Activated naive CD4-positive, alpha-beta T cell treated with anti-CD3 and anti-CD28 coated beads for 36 hours (primary cell): ENCODE measurements at regions of chr12 and their contacts with region 1.

Region 1: DNA sequence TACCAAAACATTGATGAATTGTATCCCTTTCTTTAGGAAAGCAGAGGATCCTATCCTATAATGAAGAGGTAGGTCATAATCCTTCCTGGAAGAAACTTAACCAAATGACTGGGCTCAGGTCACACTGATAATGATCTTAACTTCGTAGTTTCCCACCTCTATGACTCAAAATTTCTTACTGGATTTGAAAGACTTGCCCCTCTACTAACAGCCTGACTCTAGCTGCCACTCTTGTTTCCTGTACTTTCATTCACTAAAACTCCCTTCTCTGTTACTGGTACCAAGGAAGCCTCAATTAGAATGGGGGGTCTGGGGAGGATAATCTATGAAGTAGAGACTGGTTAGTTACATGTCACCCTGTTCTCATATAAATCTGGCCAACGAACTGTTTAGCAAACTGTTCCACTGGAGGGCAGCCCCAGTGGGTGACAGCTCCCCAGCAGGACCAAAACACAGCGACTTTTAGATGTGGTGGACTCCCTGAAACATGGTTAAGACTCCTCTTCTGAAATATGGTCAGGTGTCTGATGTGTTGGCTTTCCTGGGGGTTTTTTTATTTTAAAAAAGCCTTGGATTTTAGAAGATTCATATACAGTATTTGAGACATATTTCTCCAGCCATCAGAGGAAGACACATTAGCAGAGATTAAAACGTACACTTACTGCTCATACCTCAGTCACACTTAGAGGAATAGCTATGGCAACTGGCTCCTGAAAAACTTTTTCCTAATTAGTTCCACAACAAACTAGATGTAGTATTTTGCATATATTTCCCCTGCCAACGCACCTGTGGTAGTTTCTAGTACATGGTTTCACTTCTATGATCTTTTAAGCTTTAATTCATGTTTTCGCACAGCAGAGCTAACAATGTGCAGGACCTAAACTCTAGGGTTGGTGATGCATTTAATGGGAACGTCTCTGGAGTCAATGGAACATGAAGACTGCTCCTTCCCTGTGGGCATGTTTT is 72.3 kb downstream of the ACADS start:
- DNase-seq: peak; percentile 28
- H3K4me3 Mint-ChIP-seq: no peak overlapping the region
- H3K27ac Mint-ChIP-seq: peak overlapping the region; percentile 89
- H3K4me1 Mint-ChIP-seq: peaks cover 47% of the 10 kb centered on the region
- H3K27me3 Mint-ChIP-seq: no peaks in the 10 kb centered on the region

Region 2: GRCh38 chr12:120783197-120783596 is 14.8 kb before region 1 on chr12:
- CTCF ChIA-PET with region 1: interaction called, 7 read pairs
- intact Hi-C with region 1: loop called (anchors 1 kb)
- DNase-seq: peak; percentile 49
- H3K4me3 Mint-ChIP-seq: no peak overlapping the region
- H3K27ac Mint-ChIP-seq: peak overlapping the region; percentile 53
- H3K4me1 Mint-ChIP-seq: peaks cover 25% of the 10 kb centered on the region
- H3K27me3 Mint-ChIP-seq: no peaks in the 10 kb centered on the region

Region 3: GRCh38 chr12:120833849-120834248 is 35.9 kb after region 1 on chr12:
- CTCF ChIA-PET with region 1: no interaction called
- intact Hi-C with region 1: loop called (anchors 1 kb)
- DNase-seq: no peak
- H3K4me3 Mint-ChIP-seq: no peak overlapping the region
- H3K27ac Mint-ChIP-seq: no peak overlapping the region
- H3K4me1 Mint-ChIP-seq: peaks cover 70% of the 10 kb centered on the region
- H3K27me3 Mint-ChIP-seq: no peaks in the 10 kb centered on the region

Region 4: DNA sequence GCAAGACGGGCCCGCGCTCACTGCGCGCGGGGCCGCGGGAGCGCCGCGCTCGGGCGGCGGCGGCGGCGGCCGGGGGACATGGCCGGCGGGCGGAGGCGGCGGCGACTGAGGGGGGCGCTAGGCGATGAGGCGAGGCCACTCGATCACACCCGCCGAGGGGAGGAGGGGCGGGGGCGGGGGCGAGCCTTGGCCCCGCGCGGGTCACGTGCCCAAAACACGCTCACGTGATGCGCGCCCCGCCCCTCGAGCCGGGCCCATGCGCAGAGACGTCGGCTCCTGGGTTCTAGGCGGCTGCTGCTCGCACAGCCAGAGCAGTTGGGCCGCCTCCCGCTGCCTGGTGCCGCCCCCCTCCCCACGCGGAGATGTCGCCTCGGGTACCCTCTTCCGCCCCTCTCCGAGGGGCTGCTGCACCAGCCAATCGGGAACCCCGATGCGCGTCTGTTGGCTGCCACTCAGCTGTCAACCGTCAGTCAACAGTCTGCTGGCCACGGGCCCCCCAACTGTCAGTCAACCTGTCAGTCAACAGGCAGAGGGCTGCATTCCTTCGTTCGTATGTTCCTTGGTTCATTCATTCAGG is 106.3 kb after region 1 on chr12 and contains the start of gene SPPL3:
- CTCF ChIA-PET with region 1: no interaction called
- intact Hi-C with region 1: loop called (anchors 5 kb)
- DNase-seq: peak; percentile 91
- H3K4me3 Mint-ChIP-seq: peak within 1 kb of the TSS; percentile 99
- H3K27ac Mint-ChIP-seq: peak within 1 kb of the TSS; percentile 91
- H3K4me1 Mint-ChIP-seq: peaks cover 28% of the 10 kb centered on the region
- H3K27me3 Mint-ChIP-seq: no peaks in the 10 kb centered on the region
- total RNA-seq, gene SPPL3: 19.8 to 22.2 TPM

Region 5: DNA sequence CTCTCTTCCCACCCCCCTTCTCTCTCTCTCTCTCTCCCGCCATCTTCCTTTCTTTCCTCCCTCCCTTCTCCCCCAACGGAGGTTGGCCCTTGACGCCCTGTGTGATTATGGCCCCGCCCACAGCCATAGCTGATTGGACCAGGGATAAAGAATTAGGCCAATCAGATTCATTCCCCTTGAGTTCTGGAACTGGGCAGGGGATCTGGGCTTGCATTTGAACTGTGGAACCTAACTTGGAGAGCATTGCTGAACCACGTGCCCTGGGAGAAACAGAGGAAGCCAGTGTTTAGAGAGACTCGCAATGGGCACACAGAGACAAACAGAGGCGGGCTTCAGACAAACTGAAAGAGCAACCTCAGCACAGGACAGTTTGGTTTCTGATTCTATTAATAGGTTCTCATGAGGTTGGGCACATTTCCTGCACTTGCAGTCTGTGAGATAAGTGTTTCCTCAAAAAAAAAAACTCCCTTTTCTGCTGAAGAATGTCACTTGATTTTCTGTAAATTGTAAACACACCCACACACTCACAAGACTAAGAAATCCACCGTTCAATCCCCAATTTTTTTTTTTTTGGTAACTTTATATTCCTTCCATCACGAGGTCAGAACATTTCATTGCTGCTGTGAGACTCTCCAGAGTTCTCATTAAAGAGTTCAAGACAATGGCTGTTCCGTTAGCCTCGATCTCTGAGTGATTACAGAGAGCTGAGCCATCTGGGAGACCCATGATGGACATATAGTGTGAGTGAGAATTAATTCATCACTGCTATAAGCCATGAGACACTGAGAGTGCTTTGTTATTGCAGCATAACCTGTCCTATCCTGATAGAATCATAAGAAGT is 331.2 kb after region 1 on chr12:
- CTCF ChIA-PET with region 1: no interaction called
- intact Hi-C with region 1: loop called (anchors 10 kb)
- DNase-seq: peak; percentile 93
- H3K4me3 Mint-ChIP-seq: peak overlapping the region; percentile 60
- H3K27ac Mint-ChIP-seq: peak overlapping the region; percentile 98
- H3K4me1 Mint-ChIP-seq: peaks cover 62% of the 10 kb centered on the region
- H3K27me3 Mint-ChIP-seq: no peaks in the 10 kb centered on the region